Natural killer cell (primary cell): ENCODE measurements at regions of chr22 and their contacts with region 1.

Region 1: GRCh38 chr22:43812149-43812842 is at the start of gene EFCAB6:
- DNase-seq: peak; percentile 83 to 97
- ATAC-seq: peak; percentile 90 to 94 (median 91)
- H3K4me3 ChIP-seq: peak within 1 kb of the TSS; percentile 71
- H3K4me3 Mint-ChIP-seq: peak within 1 kb of the TSS; percentile 95
- H3K27ac ChIP-seq: peak within 1 kb of the TSS; percentile 62
- H3K27ac Mint-ChIP-seq: peak within 1 kb of the TSS; percentile 87 to 88
- H3K4me1 ChIP-seq: peaks cover 16% of the 10 kb centered on the region
- H3K4me1 Mint-ChIP-seq: peaks cover 16 to 42% of the 10 kb centered on the region in 2 donors
- H3K27me3 ChIP-seq: no peaks in the 10 kb centered on the region
- H3K27me3 Mint-ChIP-seq: peaks cover 2 to 14% of the 10 kb centered on the region in 2 donors
- CTCF ChIP-seq: no peak
- total RNA-seq, gene EFCAB6: 0.23 to 0.35 (median 0.26) TPM

Region 2: DNA sequence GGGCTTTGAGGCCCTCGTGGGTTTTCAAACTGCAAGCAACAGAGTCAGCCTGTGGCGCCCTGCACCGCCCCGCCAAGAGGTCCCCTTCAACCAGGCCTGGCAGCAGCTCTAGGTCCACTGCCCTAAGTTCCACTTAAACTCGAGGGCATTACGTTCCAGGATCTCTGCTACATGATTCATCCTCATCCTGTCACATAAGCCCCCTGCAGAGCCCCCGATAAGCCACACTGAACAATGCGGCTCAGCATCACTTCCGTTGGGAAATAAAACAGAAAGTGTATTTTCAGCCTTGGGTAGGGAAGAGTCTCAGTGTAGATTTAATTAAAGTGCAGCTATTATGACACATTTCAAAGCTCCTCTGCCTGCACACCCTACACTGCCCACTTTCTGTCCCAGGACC is 25.4 kb after region 1 on chr22:
- intact Hi-C with region 1: no loop called
- DNase-seq: no peak
- ATAC-seq: no peak
- H3K4me3 ChIP-seq: no peak overlapping the region
- H3K4me3 Mint-ChIP-seq: no peak overlapping the region
- H3K27ac ChIP-seq: no peak overlapping the region
- H3K27ac Mint-ChIP-seq: no peak overlapping the region
- H3K4me1 ChIP-seq: no peaks in the 10 kb centered on the region
- H3K4me1 Mint-ChIP-seq: no peaks in the 10 kb centered on the region
- H3K27me3 ChIP-seq: no peaks in the 10 kb centered on the region
- H3K27me3 Mint-ChIP-seq: peaks cover 5 to 9% of the 10 kb centered on the region in 2 donors
- CTCF ChIP-seq: no peak

Region 3: DNA sequence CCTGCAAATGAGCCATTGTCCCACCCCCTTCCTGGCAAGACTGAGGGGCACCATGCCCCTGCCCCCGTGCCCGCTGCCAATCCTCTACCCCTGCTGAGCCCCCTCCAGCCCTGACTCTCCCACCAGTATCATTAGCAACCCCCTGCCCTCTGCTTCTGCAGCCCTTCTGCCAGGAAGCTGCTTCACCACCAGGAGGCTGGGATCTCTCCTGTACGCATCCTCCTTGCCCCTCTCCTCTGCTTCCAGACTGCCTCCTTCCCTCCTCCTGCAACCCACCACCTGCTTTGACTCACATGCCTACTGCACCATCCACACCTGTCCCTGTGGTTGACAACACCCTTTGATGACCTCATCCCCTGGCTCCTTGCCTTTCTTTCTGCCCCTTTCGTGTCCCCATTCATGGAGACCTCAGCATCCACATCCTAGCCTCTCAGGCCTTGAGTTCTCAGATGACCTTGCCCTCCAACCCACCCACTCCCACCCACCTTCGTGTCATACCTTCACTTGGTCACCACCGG is 97.9 kb after region 1 on chr22:
- intact Hi-C with region 1: no loop called
- DNase-seq: no peak
- ATAC-seq: no peak
- H3K4me3 ChIP-seq: no peak overlapping the region
- H3K4me3 Mint-ChIP-seq: no peak overlapping the region
- H3K27ac ChIP-seq: no peak overlapping the region
- H3K27ac Mint-ChIP-seq: no peak overlapping the region
- H3K4me1 ChIP-seq: no peaks in the 10 kb centered on the region
- H3K4me1 Mint-ChIP-seq: no peaks in the 10 kb centered on the region
- H3K27me3 ChIP-seq: no peaks in the 10 kb centered on the region
- H3K27me3 Mint-ChIP-seq: peaks cover 12 to 27% of the 10 kb centered on the region in 2 donors
- CTCF ChIP-seq: no peak

Region 4: GRCh38 chr22:44180706-44181032 is 368.4 kb after region 1 on chr22 and contains the start of gene PARVG:
- intact Hi-C with region 1: loop called (anchors 5 kb)
- DNase-seq: peak; percentile 26 to 84
- ATAC-seq: peak; percentile 34 to 50 (median 46)
- H3K4me3 ChIP-seq: peak within 1 kb of the TSS; percentile 80
- H3K4me3 Mint-ChIP-seq: peak within 1 kb of the TSS; percentile 90
- H3K27ac ChIP-seq: peak within 1 kb of the TSS; percentile 71
- H3K27ac Mint-ChIP-seq: peak within 1 kb of the TSS; percentile 91
- H3K4me1 ChIP-seq: peaks cover 35% of the 10 kb centered on the region
- H3K4me1 Mint-ChIP-seq: peaks cover 28 to 41% of the 10 kb centered on the region in 2 donors
- H3K27me3 ChIP-seq: no peaks in the 10 kb centered on the region
- H3K27me3 Mint-ChIP-seq: no peaks in the 10 kb centered on the region
- CTCF ChIP-seq: no peak
- total RNA-seq, gene PARVG: 130 to 146 (median 131) TPM